ENCODE measurements at regions of chr7 and their contacts with region 1.

Region 1: DNA sequence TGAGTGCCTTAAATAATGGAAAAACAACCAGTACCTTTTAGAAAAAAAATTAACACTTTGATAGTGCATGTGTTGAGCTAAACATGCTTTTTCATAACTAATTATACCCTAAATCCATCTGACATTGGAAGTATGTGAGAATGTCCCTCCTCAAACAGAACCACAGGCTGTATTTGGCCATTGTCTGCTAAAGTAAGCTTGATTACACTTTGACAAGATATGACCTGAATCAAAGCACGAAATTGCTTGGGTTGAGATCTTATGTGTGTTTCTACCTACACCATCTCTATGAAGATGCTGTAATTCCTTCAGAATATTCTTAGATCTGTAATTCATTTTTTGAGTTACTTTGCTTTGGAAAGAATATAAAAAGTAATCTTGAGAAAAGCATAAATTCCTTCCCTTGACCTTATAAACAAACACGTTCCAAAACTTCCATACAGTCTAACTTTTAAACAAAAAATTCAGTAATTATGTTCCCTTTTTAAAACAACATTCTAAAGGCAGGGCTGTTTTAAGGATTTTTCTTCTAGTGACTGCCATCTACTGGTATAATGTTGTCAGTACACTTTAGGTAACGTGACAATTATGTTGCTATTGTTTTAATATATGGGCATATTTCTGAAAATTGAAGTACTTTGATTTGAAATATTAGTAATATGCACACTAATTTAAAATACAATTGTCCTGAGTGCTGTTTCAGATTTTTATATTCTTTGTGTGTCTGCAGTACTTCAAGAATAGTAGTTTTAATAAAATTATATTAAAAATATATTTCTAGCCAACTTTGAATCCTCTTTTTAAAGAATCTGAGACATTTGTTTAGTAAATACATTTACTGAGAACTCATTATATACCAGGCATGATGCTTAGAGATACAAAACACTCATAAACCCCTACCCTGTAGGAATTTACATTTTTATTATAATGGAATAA is 20.9 kb downstream of the CD36 start:
- DNase-seq: no peak
- ATAC-seq: peak in 1 of 2 donors; percentile 51
- H3K4me3 ChIP-seq: no peak overlapping the region
- H3K27ac ChIP-seq: no peak overlapping the region
- H3K4me1 ChIP-seq: peaks cover 17% of the 10 kb centered on the region
- H3K27me3 ChIP-seq: no peaks in the 10 kb centered on the region
- CTCF ChIP-seq: peak; percentile 67

Region 2: GRCh38 chr7:80428161-80429054 is 231.0 kb before region 1 on chr7:
- intact Hi-C with region 1: loop called (anchors 5 kb)
- DNase-seq: no peak
- ATAC-seq: peak; percentile 70 to 91
- H3K4me3 ChIP-seq: no peak overlapping the region
- H3K27ac ChIP-seq: no peak overlapping the region
- H3K4me1 ChIP-seq: no peaks in the 10 kb centered on the region
- H3K27me3 ChIP-seq: no peaks in the 10 kb centered on the region
- CTCF ChIP-seq: peak; percentile 70